PC-3 (cell line): ENCODE measurements at regions of chr21 and their contacts with region 1.

Region 1: DNA sequence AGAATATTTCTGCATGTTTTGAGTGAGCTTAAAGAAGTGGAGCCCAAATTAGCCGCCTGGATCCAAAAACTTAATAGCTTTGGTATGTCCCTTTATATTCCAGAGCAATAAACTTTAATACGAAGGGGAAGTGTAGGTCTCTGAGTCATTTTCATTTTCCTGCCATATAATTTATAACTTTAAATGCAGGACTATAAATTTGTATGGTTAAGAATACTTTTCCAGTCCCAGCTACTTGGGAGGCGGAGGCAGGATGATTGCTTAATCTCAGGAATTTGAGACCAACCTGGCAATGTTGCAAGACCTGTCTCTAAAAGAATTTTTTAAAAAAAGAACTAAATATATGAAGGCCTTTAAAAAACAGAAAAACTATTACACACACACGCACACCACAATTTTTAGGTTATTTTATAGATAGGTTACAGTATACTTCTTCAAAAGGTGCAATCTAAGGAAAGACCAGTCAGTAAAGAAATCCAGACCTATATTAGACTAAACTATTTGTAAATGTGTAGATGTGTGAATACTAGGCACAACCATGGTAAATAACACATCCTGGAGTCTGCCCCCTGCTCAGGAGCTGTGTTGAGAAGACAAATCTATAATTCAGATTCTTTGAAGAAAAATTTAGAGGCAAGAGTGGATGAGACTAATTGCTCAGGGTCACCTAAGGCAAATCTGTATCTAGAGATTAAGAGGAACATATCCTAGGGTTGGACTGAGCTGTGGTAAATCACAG is 80.3 kb downstream of the TTC3 start:
- DNase-seq: peak; percentile 94
- ATAC-seq: peak; percentile 59
- H3K4me3 ChIP-seq: peak overlapping the region; percentile 25; the same call in 1 of the 2 replicates
- H3K27ac ChIP-seq: peak overlapping the region; percentile 90
- H3K4me1 ChIP-seq: peaks cover 42% of the 10 kb centered on the region
- H3K27me3 ChIP-seq: no peaks in the 10 kb centered on the region
- CTCF ChIP-seq: no peak

Region 2: DNA sequence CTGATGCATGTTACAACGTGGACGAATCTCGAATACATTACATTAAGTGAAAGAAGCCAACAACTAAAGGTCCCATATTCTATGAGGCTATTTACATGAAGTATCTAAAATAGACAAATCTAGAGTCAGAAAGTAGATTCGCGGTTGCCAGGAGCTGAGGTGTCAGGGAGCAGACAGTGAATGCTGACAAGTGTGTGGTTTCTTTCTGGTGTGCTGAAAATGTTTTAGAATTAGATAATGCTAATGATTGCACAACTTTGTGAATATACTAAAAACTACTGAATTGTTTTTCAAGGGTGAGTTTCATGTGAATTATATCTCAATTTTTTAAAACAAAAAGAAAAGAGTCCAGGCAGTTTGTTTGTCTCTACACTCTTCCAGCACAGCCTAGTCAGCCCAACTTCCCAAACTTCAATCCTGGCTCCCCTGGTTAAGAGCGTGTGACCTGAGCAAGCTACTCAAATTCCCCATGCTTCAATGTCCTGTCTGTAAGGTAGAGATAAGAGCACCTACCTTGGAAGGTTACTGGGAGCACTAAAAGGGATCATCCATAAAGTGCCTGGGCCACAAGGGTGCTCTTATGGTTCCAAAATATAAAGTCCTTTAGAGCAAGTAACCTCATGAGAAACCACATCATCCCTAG is 207.7 kb before region 1 on chr21:
- CTCF ChIA-PET with region 1: no interaction called
- POLR2A ChIA-PET with region 1: no interaction called
- intact Hi-C with region 1: no loop called
- DNase-seq: no peak
- ATAC-seq: no peak
- H3K4me3 ChIP-seq: no peak overlapping the region
- H3K27ac ChIP-seq: no peak overlapping the region
- H3K4me1 ChIP-seq: no peaks in the 10 kb centered on the region
- H3K27me3 ChIP-seq: no peaks in the 10 kb centered on the region
- CTCF ChIP-seq: no peak

Region 3: DNA sequence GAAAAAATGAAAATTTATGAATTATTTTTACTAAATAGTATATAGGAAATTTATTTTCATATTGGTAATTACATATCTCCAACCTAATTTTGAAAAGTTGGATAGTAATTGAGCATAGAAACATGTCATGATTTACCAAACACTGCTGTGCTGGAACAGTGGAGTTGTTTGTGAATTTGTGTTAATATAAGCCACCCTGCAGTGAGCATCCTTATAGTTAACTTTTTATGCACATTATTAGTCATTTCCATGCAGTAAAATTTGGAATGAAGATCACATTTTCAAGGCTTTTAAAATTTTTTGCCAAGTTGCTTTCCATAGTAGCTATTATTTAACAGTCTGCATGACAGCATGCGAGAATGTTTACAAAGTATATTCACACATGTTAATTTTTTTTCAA is 35.5 kb after region 1 on chr21:
- CTCF ChIA-PET with region 1: interaction called, 6 read pairs
- POLR2A ChIA-PET with region 1: no interaction called
- intact Hi-C with region 1: loop called (anchors 2 kb)
- DNase-seq: peak; percentile 39
- ATAC-seq: peak; percentile 92
- H3K4me3 ChIP-seq: no peak overlapping the region
- H3K27ac ChIP-seq: no peak overlapping the region
- H3K4me1 ChIP-seq: no peaks in the 10 kb centered on the region
- H3K27me3 ChIP-seq: no peaks in the 10 kb centered on the region
- CTCF ChIP-seq: no peak